ENCODE measurements at regions of chr20 and their contacts with region 1.

Region 1: GRCh38 chr20:38962044-38962927 is at the start of gene DHX35:
- DNase-seq: peak; percentile 96
- ATAC-seq: peak; percentile 97 to 98
- H3K4me3 ChIP-seq: peak within 1 kb of the TSS; percentile 94 to 99 (median 96)
- H3K27ac ChIP-seq: peak within 1 kb of the TSS; percentile 95 to 98 (median 96)
- H3K4me1 ChIP-seq: peaks cover 15 to 20% of the 10 kb centered on the region in 2 donors
- H3K27me3 ChIP-seq: no peaks in the 10 kb centered on the region
- CTCF ChIP-seq: peak in 2 of 5 experiments; percentile 28 to 40
- POLR2A ChIP-seq: peak in 1 of 2 donors; percentile 19
- total RNA-seq, gene DHX35: 8.2 to 10.8 (median 9.3) TPM

Region 2: GRCh38 chr20:38748097-38748860 is 214.0 kb before region 1 on chr20 and contains the start of gene ACTR5:
- in situ Hi-C with region 1: no loop called
- intact Hi-C with region 1: loop called (anchors 1 kb)
- DNase-seq: peak; percentile 84 to 87
- ATAC-seq: peak; percentile 96 to 98
- H3K4me3 ChIP-seq: peak within 1 kb of the TSS; percentile 64 to 95 (median 80)
- H3K27ac ChIP-seq: peak within 1 kb of the TSS; percentile 78 to 93 (median 86)
- H3K4me1 ChIP-seq: peaks cover 4 to 11% of the 10 kb centered on the region in 2 donors
- H3K27me3 ChIP-seq: peaks cover 0 to 2% (median 0%) of the 10 kb centered on the region in 3 donors
- CTCF ChIP-seq: no peak
- POLR2A ChIP-seq: peak; percentile 35 to 46
- total RNA-seq, gene ACTR5: 6.3 to 10.0 (median 8.0) TPM

Region 3: GRCh38 chr20:38926142-38926933 is 35.9 kb before region 1 on chr20 and contains the start of gene FAM83D:
- in situ Hi-C with region 1: no loop called
- intact Hi-C with region 1: loop called (anchors 2 kb)
- DNase-seq: peak; percentile 70 to 84
- ATAC-seq: peak; percentile 96 to 97
- H3K4me3 ChIP-seq: peak within 1 kb of the TSS; percentile 51 to 76 (median 62)
- H3K27ac ChIP-seq: no peak within 1 kb of the TSS
- H3K4me1 ChIP-seq: peaks cover 5 to 11% of the 10 kb centered on the region in 2 donors
- H3K27me3 ChIP-seq: peaks cover 3 to 10% (median 7%) of the 10 kb centered on the region in 3 donors
- CTCF ChIP-seq: peak in 3 of 5 experiments; percentile 13 to 74 (median 26)
- POLR2A ChIP-seq: peak in 1 of 2 donors; percentile 72
- total RNA-seq, gene FAM83D: 0.40 TPM in 1 of 4 donors, not detected in the others